Psoas muscle (tissue), 8 donors: ENCODE measurements at regions of chr2 and their contacts with region 1.

Region 1: DNA sequence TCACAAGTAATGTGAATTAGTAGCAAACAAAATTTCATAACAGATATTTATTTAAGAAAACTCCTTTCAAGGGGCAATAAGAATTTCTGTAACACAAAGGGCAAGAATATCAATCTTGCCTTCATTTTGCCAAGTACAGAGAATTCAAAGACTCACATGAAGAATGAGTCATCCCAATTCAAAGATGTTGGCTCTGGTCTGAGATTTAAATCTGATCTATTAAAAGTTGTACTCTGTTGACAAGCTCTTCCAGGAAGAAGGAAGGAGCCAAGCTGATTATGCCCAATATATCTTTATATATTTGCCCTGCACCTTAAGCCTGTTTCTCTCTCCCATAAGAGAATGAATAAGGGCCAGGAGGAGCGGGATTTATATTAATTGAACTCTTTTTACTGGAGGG is 55.9 kb upstream of the RPE start:
- DNase-seq: no peak
- ATAC-seq: no peak
- H3K4me3 ChIP-seq: no peak overlapping the region
- H3K27ac ChIP-seq: no peak overlapping the region
- H3K4me1 ChIP-seq: no peaks in the 10 kb centered on the region
- H3K27me3 ChIP-seq: no peaks in the 10 kb centered on the region
- CTCF ChIP-seq: no peak

Region 2: DNA sequence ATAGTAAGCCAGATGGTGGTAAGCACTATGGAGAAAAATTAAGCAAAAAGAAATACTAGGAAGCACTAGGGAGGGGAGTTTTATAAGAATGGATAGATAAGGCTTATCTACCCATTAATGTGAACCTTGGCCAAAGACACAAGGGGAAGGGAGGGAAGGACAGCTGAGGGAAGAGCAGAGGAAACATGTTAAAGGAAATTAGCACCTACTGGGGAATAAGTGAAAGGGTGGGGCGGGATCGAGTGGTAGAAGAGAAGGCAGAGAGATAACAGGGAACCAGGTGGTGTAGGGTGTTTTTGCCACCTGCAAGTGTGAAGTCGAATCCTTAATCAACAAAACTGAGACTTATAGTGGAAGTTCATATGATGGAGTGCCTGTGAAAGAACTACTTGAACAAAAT is 173.2 kb before region 1 on chr2:
- intact Hi-C with region 1: loop called in 1 of 2 experiments (anchors 2 kb)
- DNase-seq: no peak
- ATAC-seq: no peak
- H3K4me3 ChIP-seq: no peak overlapping the region
- H3K27ac ChIP-seq: no peak overlapping the region
- H3K4me1 ChIP-seq: no peaks in the 10 kb centered on the region
- H3K27me3 ChIP-seq: peaks cover 2 to 50% (median 8%) of the 10 kb centered on the region in 3 donors
- CTCF ChIP-seq: no peak

Region 3: GRCh38 chr2:210267698-210268097 is 321.2 kb after region 1 on chr2:
- intact Hi-C with region 1: no loop called
- DNase-seq: no peak
- ATAC-seq: no peak
- H3K4me3 ChIP-seq: no peak overlapping the region
- H3K27ac ChIP-seq: no peak overlapping the region
- H3K4me1 ChIP-seq: no peaks in the 10 kb centered on the region
- H3K27me3 ChIP-seq: no peaks in the 10 kb centered on the region
- CTCF ChIP-seq: no peak